Activated CD8-positive, alpha-beta T cell treated with anti-CD3 and anti-CD28 coated beads, Interleukin-2, amount 10 ng/mL, durations not matched to agents 7 days and 5 days (primary cell): ENCODE measurements at regions of chr17 and their contacts with region 1.

Region 1: GRCh38 chr17:57243171-57243948 is 13.0 kb upstream of the MSI2 start:
- DNase-seq: peak; percentile 85
- ATAC-seq: peak; percentile 80
- H3K4me3 Mint-ChIP-seq: no peak overlapping the region
- H3K27ac Mint-ChIP-seq: no peak overlapping the region
- H3K4me1 Mint-ChIP-seq: peaks cover 9% of the 10 kb centered on the region
- H3K27me3 Mint-ChIP-seq: peaks cover 17% of the 10 kb centered on the region

Region 2: DNA sequence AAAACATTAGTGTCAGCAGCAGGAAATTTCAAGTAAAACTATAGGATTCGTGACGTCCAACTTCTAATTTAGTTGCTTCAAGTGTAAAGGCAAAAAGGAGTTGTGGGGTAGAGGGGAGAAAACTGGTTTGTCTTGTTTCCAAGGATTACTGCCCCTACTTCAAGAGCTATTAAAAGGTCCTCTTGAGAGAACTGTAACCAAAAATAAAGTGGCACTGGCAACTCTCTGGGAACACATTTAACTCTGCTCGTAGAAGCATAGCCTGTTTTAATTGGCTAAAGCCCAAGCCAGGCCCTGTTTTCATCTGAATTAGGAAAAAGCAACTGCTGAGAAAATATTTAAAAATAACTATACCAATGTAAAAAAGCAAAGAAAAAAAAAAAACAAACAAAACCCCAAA is 210.1 kb before region 1 on chr17:
- CTCF ChIA-PET with region 1: no interaction called
- POLR2A ChIA-PET with region 1: no interaction called
- DNase-seq: no peak
- ATAC-seq: no peak
- H3K4me3 Mint-ChIP-seq: no peak overlapping the region
- H3K27ac Mint-ChIP-seq: no peak overlapping the region
- H3K4me1 Mint-ChIP-seq: no peaks in the 10 kb centered on the region
- H3K27me3 Mint-ChIP-seq: peaks cover 24% of the 10 kb centered on the region

Region 3: GRCh38 chr17:57080441-57081080 is 162.8 kb before region 1 on chr17:
- CTCF ChIA-PET with region 1: no interaction called
- POLR2A ChIA-PET with region 1: no interaction called
- DNase-seq: no peak
- ATAC-seq: no peak
- H3K4me3 Mint-ChIP-seq: no peak overlapping the region
- H3K27ac Mint-ChIP-seq: no peak overlapping the region
- H3K4me1 Mint-ChIP-seq: peaks cover 11% of the 10 kb centered on the region
- H3K27me3 Mint-ChIP-seq: peaks cover 3% of the 10 kb centered on the region

Region 4: DNA sequence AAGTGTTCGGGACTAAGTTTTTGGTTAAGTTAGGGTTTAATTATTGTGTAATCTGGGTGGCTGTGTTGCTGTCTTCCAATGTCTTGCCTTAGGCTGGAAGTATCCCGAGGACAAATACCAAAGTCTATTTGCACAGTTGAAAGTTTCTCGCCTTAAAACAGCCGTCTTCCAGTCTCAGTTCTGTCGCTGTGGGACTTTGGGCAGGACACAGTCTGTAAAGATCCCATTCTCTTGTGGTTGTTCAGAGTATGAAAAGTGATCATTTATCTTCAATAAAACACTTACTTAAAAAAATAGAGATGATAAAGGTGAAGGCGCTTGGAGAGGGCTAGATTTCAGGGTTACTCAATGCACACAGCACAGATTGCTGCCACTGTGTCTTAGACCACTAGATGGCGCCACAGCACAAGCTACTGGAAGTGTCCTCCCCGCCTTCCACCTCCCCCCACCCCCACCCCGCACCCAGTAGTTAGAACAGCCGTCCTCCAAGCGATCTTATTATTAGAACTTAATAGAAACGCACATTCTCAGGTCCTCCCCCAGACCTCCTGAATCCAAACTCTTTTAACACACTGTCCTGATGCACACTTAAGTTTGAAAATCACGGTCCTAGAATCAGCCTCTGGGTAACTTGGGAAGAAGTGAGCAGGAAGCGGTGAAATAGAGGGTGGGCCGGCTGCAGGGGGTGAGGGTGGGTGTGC is 112.4 kb before region 1 on chr17:
- CTCF ChIA-PET with region 1: interaction called, 10 read pairs
- POLR2A ChIA-PET with region 1: no interaction called
- DNase-seq: peak; percentile 89
- ATAC-seq: peak; percentile 91
- H3K4me3 Mint-ChIP-seq: peak overlapping the region; percentile 7
- H3K27ac Mint-ChIP-seq: no peak overlapping the region
- H3K4me1 Mint-ChIP-seq: peaks cover 7% of the 10 kb centered on the region
- H3K27me3 Mint-ChIP-seq: no peaks in the 10 kb centered on the region

Region 5: GRCh38 chr17:57277923-57278604 is 34.7 kb after region 1 on chr17:
- CTCF ChIA-PET with region 1: interaction called, 26 read pairs
- POLR2A ChIA-PET with region 1: no interaction called
- DNase-seq: no peak
- ATAC-seq: no peak
- H3K4me3 Mint-ChIP-seq: no peak overlapping the region
- H3K27ac Mint-ChIP-seq: peak overlapping the region; percentile 63
- H3K4me1 Mint-ChIP-seq: peaks cover 74% of the 10 kb centered on the region
- H3K27me3 Mint-ChIP-seq: no peaks in the 10 kb centered on the region

Region 6: DNA sequence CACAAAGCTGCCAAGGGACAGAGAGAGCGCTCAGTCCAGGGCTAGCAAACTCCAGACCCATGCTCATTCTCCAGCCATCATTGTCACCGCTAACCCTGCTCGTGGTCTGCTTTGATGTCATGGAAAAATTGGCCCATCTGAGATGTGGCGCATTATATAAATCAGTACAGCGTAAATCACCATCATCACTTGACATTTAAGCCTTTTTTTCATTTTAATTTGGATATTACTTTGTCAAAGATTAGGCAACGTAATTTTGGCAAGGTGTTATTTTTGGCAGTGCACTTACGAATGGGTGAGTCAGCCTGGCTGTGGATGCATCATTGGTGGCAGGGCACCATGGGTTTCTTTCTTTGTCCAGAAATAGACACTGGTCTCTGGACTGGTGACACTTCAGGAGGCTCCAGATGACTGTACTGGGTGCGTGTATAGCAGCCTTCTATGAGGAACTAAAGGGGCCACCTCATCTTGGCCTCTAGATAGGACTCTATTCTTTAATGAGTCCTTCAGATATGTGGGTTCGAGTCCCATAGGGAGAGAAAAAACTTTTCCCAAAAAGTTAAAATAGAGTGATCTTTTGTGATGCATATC is 179.3 kb after region 1 on chr17:
- CTCF ChIA-PET with region 1: interaction called, 13 read pairs
- POLR2A ChIA-PET with region 1: no interaction called
- DNase-seq: no peak
- ATAC-seq: no peak
- H3K4me3 Mint-ChIP-seq: no peak overlapping the region
- H3K27ac Mint-ChIP-seq: no peak overlapping the region
- H3K4me1 Mint-ChIP-seq: peaks cover 19% of the 10 kb centered on the region
- H3K27me3 Mint-ChIP-seq: no peaks in the 10 kb centered on the region

Region 7: GRCh38 chr17:57486873-57487301 is 243.5 kb after region 1 on chr17:
- CTCF ChIA-PET with region 1: interaction called, 15 read pairs
- POLR2A ChIA-PET with region 1: no interaction called
- DNase-seq: no peak
- ATAC-seq: no peak
- H3K4me3 Mint-ChIP-seq: no peak overlapping the region
- H3K27ac Mint-ChIP-seq: no peak overlapping the region
- H3K4me1 Mint-ChIP-seq: peaks cover 61% of the 10 kb centered on the region
- H3K27me3 Mint-ChIP-seq: no peaks in the 10 kb centered on the region

Region 8: GRCh38 chr17:57597531-57598453 is 354.4 kb after region 1 on chr17:
- CTCF ChIA-PET with region 1: interaction called, 28 read pairs
- POLR2A ChIA-PET with region 1: interaction called, 3 read pairs
- DNase-seq: peak; percentile 58
- ATAC-seq: no peak
- H3K4me3 Mint-ChIP-seq: no peak overlapping the region
- H3K27ac Mint-ChIP-seq: peak overlapping the region; percentile 98
- H3K4me1 Mint-ChIP-seq: peaks cover 82% of the 10 kb centered on the region
- H3K27me3 Mint-ChIP-seq: no peaks in the 10 kb centered on the region

Region 9: DNA sequence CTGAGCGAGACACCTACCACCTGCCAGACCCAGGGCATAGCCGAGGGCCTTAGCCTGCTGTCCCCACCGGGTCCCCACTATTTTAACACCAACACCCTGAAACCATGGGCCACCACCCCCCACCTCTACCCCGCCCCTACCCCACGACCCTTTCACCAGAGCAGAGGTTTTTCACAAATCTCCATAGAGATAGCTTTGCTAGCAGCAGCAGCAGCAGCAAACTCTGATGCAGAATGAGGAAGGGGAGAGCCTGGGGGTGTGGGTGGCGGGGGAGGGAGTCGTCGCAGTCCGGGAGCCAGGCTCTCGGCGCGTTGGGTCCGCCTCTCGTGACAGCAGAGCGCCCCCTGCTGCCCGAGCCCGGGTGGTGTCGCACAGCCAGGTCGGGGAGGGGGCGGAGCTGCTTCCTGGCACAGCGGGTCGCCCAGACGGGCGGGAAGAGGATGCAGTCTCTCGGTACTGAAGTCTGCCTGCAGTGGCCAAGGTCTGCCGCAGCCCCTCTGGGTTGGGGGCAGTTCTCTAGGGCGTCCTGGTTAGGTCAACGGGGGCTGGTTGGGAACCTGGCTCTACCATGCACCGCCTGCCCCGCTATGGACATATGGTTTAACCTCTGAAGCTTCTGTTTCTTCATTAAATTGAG is 539.9 kb after region 1 on chr17:
- CTCF ChIA-PET with region 1: interaction called, 28 read pairs
- POLR2A ChIA-PET with region 1: no interaction called
- DNase-seq: peak; percentile 86
- ATAC-seq: peak; percentile 97
- H3K4me3 Mint-ChIP-seq: no peak overlapping the region
- H3K27ac Mint-ChIP-seq: no peak overlapping the region
- H3K4me1 Mint-ChIP-seq: no peaks in the 10 kb centered on the region
- H3K27me3 Mint-ChIP-seq: peaks cover 22% of the 10 kb centered on the region